Dorsolateral prefrontal cortex (tissue), 120 donors: ENCODE measurements at regions of chr15 and their contacts with region 1.

Region 1: DNA sequence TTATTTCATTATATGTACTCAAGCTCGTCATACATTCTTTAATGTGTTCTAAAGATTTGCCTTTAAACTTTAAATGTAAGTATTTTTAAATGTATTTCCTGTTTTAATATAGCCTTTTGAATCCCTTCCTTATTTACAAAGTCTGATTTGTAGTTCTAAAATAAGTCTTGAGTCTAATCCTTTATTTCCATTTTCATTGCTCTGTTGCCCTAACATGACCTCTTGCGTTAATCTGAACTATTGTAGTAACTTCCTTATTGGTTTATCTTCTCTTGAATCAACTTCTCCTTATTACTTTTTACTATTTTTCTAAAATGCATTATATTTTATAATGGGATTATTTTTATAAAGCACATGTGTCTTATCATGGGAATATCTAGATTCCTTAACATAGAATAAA is 24.0 kb downstream of the KNL1 start:
- DNase-seq: no peak
- H3K4me3 ChIP-seq: no peak overlapping the region
- H3K27ac ChIP-seq: no peak overlapping the region
- H3K27me3 ChIP-seq: no peaks in the 10 kb centered on the region
- CTCF ChIP-seq: no peak

Region 2: GRCh38 chr15:40974879-40975278 is 356.9 kb after region 1 on chr15:
- intact Hi-C with region 1: loop called in 1 of 2 experiments (anchors 5 kb)
- DNase-seq: no peak
- H3K4me3 ChIP-seq: no peak overlapping the region
- H3K27ac ChIP-seq: no peak overlapping the region
- H3K27me3 ChIP-seq: no peaks in the 10 kb centered on the region
- CTCF ChIP-seq: no peak